ENCODE measurements at regions of chr16 and their contacts with region 1.

Region 1: GRCh38 chr16:12228602-12229499 is 252.3 kb downstream of the SNX29 start:
- DNase-seq: peak; percentile 35 to 76 (median 59)
- H3K4me3 ChIP-seq: no peak overlapping the region
- H3K27ac ChIP-seq: no peak overlapping the region
- H3K4me1 ChIP-seq: peaks cover 9% of the 10 kb centered on the region
- H3K27me3 ChIP-seq: no peaks in the 10 kb centered on the region
- CTCF ChIP-seq: peak; percentile 16 to 42 (median 33)
- EP300 ChIP-seq: no peak
- POLR2A ChIP-seq: no peak

Region 2: GRCh38 chr16:11506741-11507305 is 722.0 kb before region 1 on chr16:
- intact Hi-C with region 1: loop called in 1 of 4 experiments (anchors 10 kb)
- DNase-seq: no peak
- H3K4me3 ChIP-seq: no peak overlapping the region
- H3K27ac ChIP-seq: no peak overlapping the region
- H3K4me1 ChIP-seq: no peaks in the 10 kb centered on the region
- H3K27me3 ChIP-seq: no peaks in the 10 kb centered on the region
- CTCF ChIP-seq: no peak
- EP300 ChIP-seq: no peak
- POLR2A ChIP-seq: no peak

Region 3: GRCh38 chr16:12252616-12253015 is 23.8 kb after region 1 on chr16:
- intact Hi-C with region 1: no loop called
- DNase-seq: no peak
- H3K4me3 ChIP-seq: no peak overlapping the region
- H3K27ac ChIP-seq: no peak overlapping the region
- H3K4me1 ChIP-seq: no peaks in the 10 kb centered on the region
- H3K27me3 ChIP-seq: no peaks in the 10 kb centered on the region
- CTCF ChIP-seq: no peak
- EP300 ChIP-seq: no peak
- POLR2A ChIP-seq: no peak

Region 4: GRCh38 chr16:12291989-12292759 is 63.3 kb after region 1 on chr16:
- intact Hi-C with region 1: no loop called
- DNase-seq: no peak
- H3K4me3 ChIP-seq: no peak overlapping the region
- H3K27ac ChIP-seq: no peak overlapping the region
- H3K4me1 ChIP-seq: no peaks in the 10 kb centered on the region
- H3K27me3 ChIP-seq: no peaks in the 10 kb centered on the region
- CTCF ChIP-seq: no peak
- EP300 ChIP-seq: no peak
- POLR2A ChIP-seq: no peak

Measured in ovary (tissue), 10 donors.